ENCODE measurements at regions of chrX and their contacts with region 1.

Region 1: DNA sequence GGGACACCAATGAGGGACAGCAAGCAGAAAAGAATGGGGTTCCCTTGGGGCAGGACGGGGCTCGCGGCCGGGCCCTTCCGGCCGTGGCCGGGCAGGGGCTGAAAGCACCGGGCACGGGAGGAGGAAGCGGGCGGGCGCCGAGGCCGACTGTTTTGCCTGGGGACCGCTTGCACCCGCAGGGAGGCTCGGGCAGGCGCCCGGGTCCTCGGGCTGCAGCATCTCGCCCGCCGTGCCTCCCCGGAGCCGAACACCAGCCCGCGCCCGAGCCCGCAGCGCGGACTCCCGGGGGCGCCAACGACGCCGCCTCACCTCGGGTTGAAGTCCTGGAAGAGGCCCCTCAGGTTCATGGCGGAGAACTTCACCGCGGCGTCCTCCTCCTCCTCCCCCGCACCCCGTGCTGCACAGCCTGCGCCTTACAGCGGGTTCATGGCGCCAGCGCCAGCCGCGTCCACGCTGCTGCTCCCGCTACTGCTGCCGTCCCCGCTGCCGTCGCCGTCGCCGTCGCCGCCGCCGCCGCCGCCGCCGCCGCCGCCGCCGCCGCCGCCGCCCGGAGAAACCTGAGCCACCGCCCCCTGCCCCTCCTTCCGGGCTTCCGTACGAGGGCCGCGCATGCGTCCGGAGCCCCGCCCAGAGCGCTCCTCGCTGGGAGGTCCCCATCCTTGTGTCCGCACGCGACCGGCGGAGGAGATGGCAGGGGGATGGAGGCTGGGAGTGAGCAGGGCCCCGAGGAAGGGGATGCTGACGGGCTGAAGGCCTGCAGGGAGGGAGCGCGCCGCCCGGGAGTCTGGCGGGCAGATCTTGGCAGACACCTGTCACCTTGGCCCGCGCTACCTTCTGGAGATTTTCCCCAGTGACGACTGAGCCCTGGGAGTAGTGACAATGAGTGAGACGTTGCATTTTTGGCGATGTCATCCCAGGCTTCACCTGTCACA is at the start of gene TMEM185A:
- DNase-seq: peak; percentile 48 to 55
- ATAC-seq: peak; percentile 70 to 73
- H3K4me3 ChIP-seq: peak within 1 kb of the TSS; percentile 63 to 73 (median 66)
- H3K27ac ChIP-seq: peak within 1 kb of the TSS; percentile 70 to 82 (median 76)
- H3K4me1 ChIP-seq: peaks cover 12 to 15% of the 10 kb centered on the region in 2 donors
- H3K27me3 ChIP-seq: no peaks in the 10 kb centered on the region
- CTCF ChIP-seq: no peak
- POLR2A ChIP-seq: peak; percentile 10 to 28
- total RNA-seq, gene TMEM185A: 4.4 to 8.5 (median 7.7) TPM

Region 2: DNA sequence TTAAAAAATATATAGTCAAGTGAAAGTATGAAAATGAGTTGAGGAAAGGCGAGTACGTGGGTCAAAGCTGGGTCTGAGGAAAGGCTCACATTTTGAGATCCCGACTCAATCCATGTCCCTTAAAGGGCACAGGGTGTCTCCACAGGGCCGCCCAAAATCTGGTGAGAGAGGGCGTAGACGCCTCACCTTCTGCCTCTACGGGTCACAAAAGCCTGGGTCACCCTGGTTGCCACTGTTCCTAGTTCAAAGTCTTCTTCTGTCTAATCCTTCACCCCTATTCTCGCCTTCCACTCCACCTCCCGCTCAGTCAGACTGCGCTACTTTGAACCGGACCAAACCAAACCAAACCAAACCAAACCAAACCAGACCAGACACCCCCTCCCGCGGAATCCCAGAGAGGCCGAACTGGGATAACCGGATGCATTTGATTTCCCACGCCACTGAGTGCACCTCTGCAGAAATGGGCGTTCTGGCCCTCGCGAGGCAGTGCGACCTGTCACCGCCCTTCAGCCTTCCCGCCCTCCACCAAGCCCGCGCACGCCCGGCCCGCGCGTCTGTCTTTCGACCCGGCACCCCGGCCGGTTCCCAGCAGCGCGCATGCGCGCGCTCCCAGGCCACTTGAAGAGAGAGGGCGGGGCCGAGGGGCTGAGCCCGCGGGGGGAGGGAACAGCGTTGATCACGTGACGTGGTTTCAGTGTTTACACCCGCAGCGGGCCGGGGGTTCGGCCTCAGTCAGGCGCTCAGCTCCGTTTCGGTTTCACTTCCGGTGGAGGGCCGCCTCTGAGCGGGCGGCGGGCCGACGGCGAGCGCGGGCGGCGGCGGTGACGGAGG is 1720.1 kb before region 1 on chrX and contains the start of gene FMR1:
- in situ Hi-C with region 1: loop called in 1 of 4 experiments (anchors 25 kb)
- intact Hi-C with region 1: no loop called
- DNase-seq: peak; percentile 88 to 95
- ATAC-seq: peak; percentile 93
- H3K4me3 ChIP-seq: peak within 1 kb of the TSS; percentile 70 to 84 (median 80)
- H3K27ac ChIP-seq: peak within 1 kb of the TSS; percentile 90 to 95 (median 93)
- H3K4me1 ChIP-seq: peaks cover 0 to 12% of the 10 kb centered on the region in 2 donors
- H3K27me3 ChIP-seq: no peaks in the 10 kb centered on the region
- CTCF ChIP-seq: no peak
- POLR2A ChIP-seq: peak; percentile 48 to 59
- total RNA-seq, gene FMR1: 5.2 to 10.1 (median 6.7) TPM

Region 3: DNA sequence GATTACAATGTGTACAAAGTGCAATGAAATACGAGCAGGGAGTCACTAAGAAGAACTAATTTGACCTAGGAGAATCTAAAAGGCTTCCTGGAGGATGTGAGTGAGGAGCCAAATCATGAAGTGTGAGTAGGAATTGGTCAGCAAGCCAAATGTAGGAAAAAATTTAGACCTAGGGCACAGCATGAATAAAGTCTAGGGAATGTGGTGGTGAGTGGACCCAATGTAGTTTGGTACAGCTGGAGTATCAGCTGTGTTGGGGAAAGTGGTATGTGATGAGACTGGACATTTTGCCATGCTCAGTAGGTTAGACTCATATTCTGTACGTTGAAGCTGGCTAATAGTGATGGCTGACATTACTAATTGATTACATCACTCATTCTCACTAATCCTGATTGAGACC is 940.0 kb before region 1 on chrX:
- in situ Hi-C with region 1: no loop called
- intact Hi-C with region 1: no loop called
- DNase-seq: no peak
- ATAC-seq: no peak
- H3K4me3 ChIP-seq: no peak overlapping the region
- H3K27ac ChIP-seq: no peak overlapping the region
- H3K4me1 ChIP-seq: no peaks in the 10 kb centered on the region
- H3K27me3 ChIP-seq: no peaks in the 10 kb centered on the region
- CTCF ChIP-seq: no peak
- POLR2A ChIP-seq: no peak

Region 4: DNA sequence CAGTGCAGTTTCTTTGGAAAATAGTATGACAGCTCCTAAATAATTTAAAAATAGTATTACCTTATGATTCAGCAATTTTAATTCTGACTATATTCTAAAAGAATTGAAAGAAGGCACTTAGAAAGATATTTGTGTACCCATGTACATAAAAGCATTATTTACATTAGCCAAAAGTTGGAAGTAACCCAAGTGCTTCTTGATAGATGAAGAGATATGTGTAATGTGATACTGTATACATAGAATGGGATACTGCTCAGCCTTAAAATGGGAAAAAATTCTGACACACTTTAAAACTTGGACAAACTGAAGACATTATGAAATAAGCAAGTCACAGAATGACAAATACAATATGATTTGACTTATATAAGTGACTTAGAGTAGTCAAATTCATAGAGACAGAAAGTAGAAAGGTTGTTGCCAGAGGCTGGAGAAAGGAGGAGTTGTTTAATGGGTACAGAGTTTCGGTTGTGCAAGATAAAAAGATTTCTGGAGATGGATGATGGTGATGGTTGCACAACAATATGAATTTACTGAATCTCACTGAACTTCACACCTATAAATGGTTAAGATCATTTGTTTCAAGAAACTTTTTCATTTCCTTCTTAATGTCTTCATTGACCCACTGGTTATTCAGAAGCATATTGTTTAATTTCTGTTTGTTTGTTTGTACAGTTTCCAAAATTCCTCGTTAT is 238.5 kb before region 1 on chrX:
- in situ Hi-C with region 1: no loop called
- intact Hi-C with region 1: no loop called
- DNase-seq: no peak
- ATAC-seq: no peak
- H3K4me3 ChIP-seq: no peak overlapping the region
- H3K27ac ChIP-seq: no peak overlapping the region
- H3K4me1 ChIP-seq: no peaks in the 10 kb centered on the region
- H3K27me3 ChIP-seq: no peaks in the 10 kb centered on the region
- CTCF ChIP-seq: no peak
- POLR2A ChIP-seq: no peak

Region 5: DNA sequence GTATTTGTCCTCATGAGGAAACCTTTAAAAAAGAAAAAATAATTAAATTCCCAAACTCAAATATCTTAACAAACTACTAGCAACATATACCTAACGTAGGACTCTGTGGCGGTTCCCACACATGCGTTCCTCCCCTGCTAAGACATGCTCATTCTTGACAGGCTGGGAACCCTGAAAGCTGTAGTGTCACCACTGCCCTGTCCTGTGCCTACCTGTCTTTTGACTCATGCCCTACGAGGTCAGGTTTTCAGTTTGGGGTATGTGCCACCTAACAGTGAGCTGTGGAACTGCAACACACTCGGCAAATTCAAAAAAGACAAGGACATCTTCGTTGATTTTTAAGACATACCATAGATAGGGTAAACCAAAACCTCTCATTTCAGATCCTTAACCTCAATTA is 144.2 kb before region 1 on chrX:
- in situ Hi-C with region 1: no loop called
- intact Hi-C with region 1: loop called (anchors 5 kb)
- DNase-seq: no peak
- ATAC-seq: no peak
- H3K4me3 ChIP-seq: no peak overlapping the region
- H3K27ac ChIP-seq: no peak overlapping the region
- H3K4me1 ChIP-seq: peaks cover 0 to 3% of the 10 kb centered on the region in 2 donors
- H3K27me3 ChIP-seq: no peaks in the 10 kb centered on the region
- CTCF ChIP-seq: no peak
- POLR2A ChIP-seq: no peak

Region 6: DNA sequence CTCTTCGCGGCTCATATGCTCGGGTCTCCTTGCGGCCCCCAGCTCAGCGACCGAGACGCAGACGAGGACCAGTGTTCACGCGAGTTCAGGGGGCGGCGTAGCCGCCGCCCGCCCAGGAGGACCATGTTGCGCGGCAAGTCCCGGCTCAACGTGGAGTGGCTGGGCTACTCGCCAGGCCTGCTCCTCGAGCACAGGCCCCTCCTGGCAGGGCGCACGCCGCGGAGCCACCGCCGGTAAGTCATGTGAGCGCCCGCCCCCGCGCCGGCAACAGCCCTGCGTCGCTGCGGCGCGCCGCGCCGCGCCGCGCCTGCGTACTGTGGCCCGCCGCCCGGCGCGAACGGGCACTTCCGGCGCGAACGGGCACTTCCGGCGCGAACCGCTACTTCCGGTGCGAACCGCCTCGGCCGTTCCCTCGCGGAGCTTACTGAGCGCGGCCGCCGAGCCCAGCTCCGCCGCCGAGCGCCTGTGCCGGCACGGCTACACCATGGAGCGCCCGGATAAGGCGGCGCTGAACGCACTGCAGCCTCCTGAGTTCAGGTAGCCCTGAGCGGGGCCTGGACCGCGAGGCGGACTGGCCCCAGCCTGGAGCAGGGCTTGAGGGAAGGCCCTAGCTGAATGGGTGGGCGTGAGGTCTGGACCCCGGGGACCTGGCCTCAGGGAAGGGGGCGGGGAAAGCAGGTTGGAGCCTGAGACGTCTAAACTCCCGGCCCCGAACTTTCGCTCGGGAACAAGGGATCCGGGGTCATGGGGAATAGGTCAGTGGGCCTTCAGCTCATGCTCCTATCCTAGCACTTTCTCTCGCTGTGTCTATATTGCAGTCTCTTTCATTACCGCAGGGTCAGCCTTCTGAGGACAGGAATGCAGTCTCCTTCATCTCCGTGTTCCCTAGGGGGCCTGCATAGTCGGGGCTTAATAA is 1765.6 kb after region 1 on chrX and contains the start of gene VMA21:
- in situ Hi-C with region 1: no loop called
- intact Hi-C with region 1: loop called (anchors 10 kb)
- DNase-seq: peak; percentile 61 to 88
- ATAC-seq: peak; percentile 85 to 92
- H3K4me3 ChIP-seq: peak within 1 kb of the TSS; percentile 66 to 91 (median 80)
- H3K27ac ChIP-seq: peak within 1 kb of the TSS; percentile 88 to 96 (median 92)
- H3K4me1 ChIP-seq: peaks cover 11 to 17% of the 10 kb centered on the region in 2 donors
- H3K27me3 ChIP-seq: no peaks in the 10 kb centered on the region
- CTCF ChIP-seq: no peak
- POLR2A ChIP-seq: peak; percentile 60 to 66
- total RNA-seq, gene VMA21: 11.5 to 18.3 (median 15.3) TPM

Measured in gastrocnemius medialis (tissue), 4 donors.